ENCODE measurements at regions of chr4 and their contacts with region 1.

Region 1: GRCh38 chr4:40897557-40898203 is 147.9 kb downstream of the NSUN7 start:
- DNase-seq: peak; percentile 85
- H3K4me3 ChIP-seq: peak overlapping the region in 1 of 2 experiments; percentile 16; a peak in 1 of 4 replicates
- H3K27ac ChIP-seq: no peak overlapping the region
- H3K4me1 ChIP-seq: no peaks in the 10 kb centered on the region
- H3K27me3 ChIP-seq: no peaks in the 10 kb centered on the region
- CTCF ChIP-seq: peak; percentile 86
- EP300 ChIP-seq: no peak
- RAD21 ChIP-seq: peak; percentile 78

Region 2: GRCh38 chr4:40736910-40737309 is 160.8 kb before region 1 on chr4:
- CTCF ChIA-PET with region 1: interaction called, 20 read pairs
- POLR2A ChIA-PET with region 1: no interaction called
- DNase-seq: peak; percentile 53
- H3K4me3 ChIP-seq: no peak overlapping the region
- H3K27ac ChIP-seq: no peak overlapping the region
- H3K4me1 ChIP-seq: no peaks in the 10 kb centered on the region
- H3K27me3 ChIP-seq: no peaks in the 10 kb centered on the region
- CTCF ChIP-seq: peak; percentile 65
- EP300 ChIP-seq: no peak
- RAD21 ChIP-seq: peak; percentile 84

Region 3: DNA sequence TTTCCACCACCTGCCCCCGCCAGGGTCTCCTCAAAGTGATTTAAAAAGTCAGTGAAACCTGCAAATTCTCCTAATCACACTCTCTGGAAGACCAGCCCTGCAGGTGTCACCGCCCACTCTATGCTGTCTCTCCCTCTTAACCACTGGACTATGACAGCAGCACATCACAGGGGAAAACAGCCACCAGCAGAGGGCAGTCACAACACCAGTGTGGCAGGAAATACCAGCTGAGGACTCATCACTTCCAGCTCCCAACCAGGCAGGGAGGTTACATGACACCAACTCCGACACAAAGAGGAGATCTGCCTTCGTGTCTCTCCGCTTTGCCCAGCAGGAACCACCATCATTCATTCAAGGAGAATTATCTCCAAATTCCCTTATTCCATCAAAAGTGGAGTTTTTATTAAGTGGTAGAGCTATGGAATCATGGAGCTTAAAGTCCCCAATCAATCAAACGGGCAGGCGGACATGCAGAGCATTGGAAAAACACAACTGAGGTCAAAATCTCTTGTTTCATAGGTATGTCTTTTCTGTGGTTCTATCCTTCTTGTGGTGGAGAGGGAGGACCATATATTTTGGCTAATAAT is 56.6 kb before region 1 on chr4:
- CTCF ChIA-PET with region 1: interaction called, 88 read pairs
- POLR2A ChIA-PET with region 1: no interaction called
- DNase-seq: peak; percentile 72
- H3K4me3 ChIP-seq: peak overlapping the region in 1 of 2 experiments; percentile 5; a peak in 1 of 4 replicates
- H3K27ac ChIP-seq: peak overlapping the region in 1 of 2 experiments; percentile 69; a peak in 2 of 4 replicates
- H3K4me1 ChIP-seq: peaks cover 0 to 26% of the 10 kb centered on the region in 2 experiments; a peak in 1 of 4 replicates
- H3K27me3 ChIP-seq: no peaks in the 10 kb centered on the region
- CTCF ChIP-seq: peak; percentile 92
- EP300 ChIP-seq: no peak
- RAD21 ChIP-seq: peak; percentile 68

Region 4: GRCh38 chr4:40881096-40881495 is 16.6 kb before region 1 on chr4:
- CTCF ChIA-PET with region 1: interaction called, 57 read pairs
- POLR2A ChIA-PET with region 1: interaction called, 4 read pairs
- DNase-seq: no peak
- H3K4me3 ChIP-seq: no peak overlapping the region
- H3K27ac ChIP-seq: no peak overlapping the region
- H3K4me1 ChIP-seq: peaks cover 0 to 13% of the 10 kb centered on the region in 2 experiments; a peak in 1 of 4 replicates
- H3K27me3 ChIP-seq: no peaks in the 10 kb centered on the region
- CTCF ChIP-seq: no peak
- EP300 ChIP-seq: no peak
- RAD21 ChIP-seq: no peak

Region 5: GRCh38 chr4:40887288-40888131 is 10.2 kb before region 1 on chr4:
- CTCF ChIA-PET with region 1: interaction called, 57 read pairs
- POLR2A ChIA-PET with region 1: no interaction called
- DNase-seq: no peak
- H3K4me3 ChIP-seq: no peak overlapping the region
- H3K27ac ChIP-seq: no peak overlapping the region
- H3K4me1 ChIP-seq: peaks cover 0 to 5% of the 10 kb centered on the region in 2 experiments; a peak in 1 of 4 replicates
- H3K27me3 ChIP-seq: no peaks in the 10 kb centered on the region
- CTCF ChIP-seq: no peak
- EP300 ChIP-seq: no peak
- RAD21 ChIP-seq: no peak

Region 6: GRCh38 chr4:40908702-40909362 is 11.2 kb after region 1 on chr4:
- CTCF ChIA-PET with region 1: interaction called, 30 read pairs
- POLR2A ChIA-PET with region 1: no interaction called
- DNase-seq: peak; percentile 77
- H3K4me3 ChIP-seq: peak overlapping the region in 1 of 2 experiments; percentile 43; a peak in 1 of 4 replicates
- H3K27ac ChIP-seq: peak overlapping the region; percentile 83 to 92
- H3K4me1 ChIP-seq: peaks cover 13 to 24% of the 10 kb centered on the region in 2 experiments
- H3K27me3 ChIP-seq: no peaks in the 10 kb centered on the region
- CTCF ChIP-seq: peak; percentile 96
- EP300 ChIP-seq: no peak
- RAD21 ChIP-seq: peak; percentile 80

Region 7: DNA sequence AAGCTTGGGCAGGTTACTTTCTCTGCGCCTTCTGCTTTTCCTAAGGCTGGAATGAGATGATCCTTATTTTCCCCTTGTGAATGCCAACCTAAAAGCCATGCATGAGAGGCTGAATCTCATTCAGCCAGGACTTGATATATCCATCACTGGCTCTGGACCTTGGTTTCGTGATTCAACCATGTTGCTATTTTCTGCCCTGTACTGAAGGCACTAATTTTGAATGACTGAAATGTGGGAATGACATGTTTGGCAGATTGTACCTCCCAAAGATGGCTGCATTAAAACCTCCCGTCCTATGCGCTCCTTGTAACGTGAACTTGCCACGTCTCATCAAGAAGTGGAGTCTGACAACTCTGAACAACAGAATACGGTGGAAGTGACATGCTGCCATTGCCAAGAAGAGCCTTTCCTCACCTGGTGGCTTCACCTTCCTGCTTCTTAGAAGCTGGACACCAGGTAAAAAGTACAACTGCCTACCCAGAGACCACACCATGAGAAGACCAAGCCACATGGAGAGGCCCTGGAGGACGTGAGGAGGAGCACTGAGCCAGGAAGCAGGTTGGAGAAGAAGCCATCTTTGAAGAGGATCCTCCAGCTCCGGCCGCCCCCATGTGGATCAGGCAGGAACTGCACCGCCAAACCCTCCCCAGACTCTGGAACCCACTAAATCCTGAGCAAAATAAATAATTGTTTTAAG is 26.6 kb after region 1 on chr4:
- CTCF ChIA-PET with region 1: interaction called, 28 read pairs
- POLR2A ChIA-PET with region 1: no interaction called
- DNase-seq: peak; percentile 83
- H3K4me3 ChIP-seq: peak overlapping the region in 1 of 2 experiments; percentile 10; a peak in 1 of 4 replicates
- H3K27ac ChIP-seq: no peak overlapping the region
- H3K4me1 ChIP-seq: no peaks in the 10 kb centered on the region; a peak in 1 of 4 replicates
- H3K27me3 ChIP-seq: no peaks in the 10 kb centered on the region
- CTCF ChIP-seq: peak; percentile 94
- EP300 ChIP-seq: no peak
- RAD21 ChIP-seq: peak; percentile 79

Measured in SK-N-SH (cell line).